Transverse colon (tissue), 4 donors: ENCODE measurements at regions of chr5 and their contacts with region 1.

Region 1: GRCh38 chr5:160605266-160605665 is 183.6 kb downstream of the PTTG1 start:
- DNase-seq: no peak
- H3K4me3 ChIP-seq: no peak overlapping the region
- H3K27ac ChIP-seq: no peak overlapping the region
- H3K4me1 ChIP-seq: peaks cover 0 to 3% (median 0%) of the 10 kb centered on the region in 4 donors
- H3K27me3 ChIP-seq: no peaks in the 10 kb centered on the region
- CTCF ChIP-seq: no peak
- EP300 ChIP-seq: no peak
- POLR2A ChIP-seq: no peak

Region 2: DNA sequence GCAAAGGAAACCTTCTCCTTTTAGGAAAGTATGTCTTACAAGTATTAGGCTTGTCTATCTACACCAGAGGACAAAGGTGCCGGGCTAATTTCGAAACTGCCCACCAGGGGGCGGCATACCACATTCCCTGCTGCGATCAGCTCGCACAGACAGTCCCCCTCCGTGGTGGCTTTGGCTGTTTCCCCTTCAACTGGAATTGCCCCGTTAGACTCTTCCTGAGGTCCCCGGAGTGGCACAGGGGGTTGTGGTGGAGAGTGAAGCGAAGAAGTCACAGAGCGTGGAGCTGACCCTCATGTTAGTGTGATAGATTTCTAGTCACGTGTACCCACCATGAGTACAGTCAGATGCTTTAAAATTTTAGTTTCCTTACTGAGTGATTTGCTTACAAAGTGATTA is 166.1 kb before region 1 on chr5:
- in situ Hi-C with region 1: loop called in 1 of 4 experiments (anchors 25 kb)
- intact Hi-C with region 1: no loop called
- DNase-seq: peak; percentile 94
- H3K4me3 ChIP-seq: peak overlapping the region in 3 of 4 donors; percentile 20 to 56 (median 21)
- H3K27ac ChIP-seq: peak overlapping the region; percentile 28 to 59 (median 48)
- H3K4me1 ChIP-seq: peaks cover 0 to 13% (median 5%) of the 10 kb centered on the region in 4 donors
- H3K27me3 ChIP-seq: no peaks in the 10 kb centered on the region
- CTCF ChIP-seq: peak; percentile 87 to 98 (median 90)
- EP300 ChIP-seq: no peak
- POLR2A ChIP-seq: no peak